AG04449 (cell line): ENCODE measurements at regions of chr10 and their contacts with region 1.

Region 1: DNA sequence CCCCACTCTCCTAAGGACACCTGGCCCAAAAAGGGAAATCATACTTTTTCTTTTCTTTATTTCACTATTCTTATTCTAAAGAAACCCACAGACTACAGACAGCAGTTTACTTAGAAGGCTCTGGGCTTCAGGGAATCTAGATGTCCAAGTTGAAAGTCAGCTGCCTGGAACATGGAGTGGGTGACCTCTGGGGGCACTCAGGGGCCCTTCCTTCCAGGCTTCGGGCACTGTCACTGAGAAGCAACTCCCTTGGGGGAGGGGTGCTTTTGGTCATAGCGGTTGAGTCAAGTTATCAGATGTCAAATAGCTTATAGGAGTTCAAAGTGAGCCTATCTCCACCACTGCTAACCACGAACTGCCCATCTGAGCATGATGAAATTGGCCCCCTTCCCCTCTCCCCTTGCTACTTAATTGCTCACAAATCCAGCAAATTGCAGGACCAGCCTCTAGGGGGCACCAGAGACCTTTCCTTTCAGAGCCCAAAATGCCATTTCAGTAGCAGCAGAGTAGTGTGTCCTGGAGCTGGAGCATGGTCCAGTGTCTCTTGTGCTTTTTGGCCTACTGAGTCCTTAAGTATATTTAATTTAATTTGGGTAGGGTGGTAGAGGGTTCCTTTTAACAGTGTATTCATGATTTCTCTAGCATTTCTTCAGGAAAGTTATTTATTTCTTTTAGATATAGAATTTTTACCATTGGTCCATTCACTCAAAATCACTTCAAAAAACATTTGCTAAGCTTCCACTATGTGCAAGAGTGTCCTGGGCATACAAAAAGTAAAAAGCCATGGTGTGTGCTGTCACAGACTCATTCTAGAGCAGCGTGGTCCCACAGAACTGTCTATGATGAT is 463.8 kb downstream of the KCNMA1 start:
- DNase-seq: no peak
- H3K4me3 ChIP-seq: no peak overlapping the region
- CTCF ChIP-seq: peak; percentile 86

Region 2: GRCh38 chr10:76036111-76036940 is 1137.5 kb before region 1 on chr10:
- CTCF ChIA-PET with region 1: no interaction called
- POLR2A ChIA-PET with region 1: no interaction called
- DNase-seq: no peak
- H3K4me3 ChIP-seq: no peak overlapping the region
- CTCF ChIP-seq: peak; percentile 93

Region 3: GRCh38 chr10:77104459-77104980 is 69.3 kb before region 1 on chr10:
- CTCF ChIA-PET with region 1: no interaction called
- POLR2A ChIA-PET with region 1: no interaction called
- DNase-seq: peak; percentile 61
- H3K4me3 ChIP-seq: no peak overlapping the region
- CTCF ChIP-seq: no peak

Region 4: GRCh38 chr10:77201135-77202106 is 27.6 kb after region 1 on chr10:
- CTCF ChIA-PET with region 1: interaction called, 10 read pairs
- POLR2A ChIA-PET with region 1: no interaction called
- DNase-seq: no peak
- H3K4me3 ChIP-seq: no peak overlapping the region
- CTCF ChIP-seq: no peak

Region 5: DNA sequence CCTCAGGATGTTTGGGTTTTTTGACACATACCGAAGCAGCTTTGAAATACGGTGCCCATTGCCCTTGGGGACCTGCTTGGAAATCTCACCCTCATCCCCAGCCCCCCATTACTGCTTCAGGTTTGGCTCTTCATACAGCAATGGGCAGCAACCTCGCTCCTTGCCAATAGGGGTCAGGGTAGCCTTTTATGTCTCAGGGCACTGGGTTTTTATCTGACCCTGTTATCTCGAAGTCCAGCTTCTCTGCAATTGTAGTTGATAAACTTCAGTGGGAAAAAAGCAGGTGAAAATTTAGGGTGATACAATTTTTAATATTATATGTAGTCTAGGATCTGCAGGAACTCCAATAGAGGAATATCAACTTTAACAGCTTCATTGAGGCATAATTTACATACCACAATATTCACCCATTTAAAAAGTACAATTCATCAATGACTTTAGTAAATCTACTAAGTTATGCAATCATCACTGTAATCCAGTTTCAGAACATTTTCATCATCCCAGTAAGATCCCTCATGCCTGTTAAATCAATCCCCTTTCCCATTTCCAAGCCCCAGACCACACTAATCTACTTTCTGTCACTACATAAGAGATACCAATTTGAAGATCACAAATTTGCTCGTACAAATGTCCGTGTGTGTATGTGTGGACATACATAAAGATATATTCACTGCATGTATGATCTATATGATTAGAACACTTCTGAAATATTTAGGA is 77.6 kb after region 1 on chr10:
- CTCF ChIA-PET with region 1: interaction called, 45 read pairs
- POLR2A ChIA-PET with region 1: no interaction called
- DNase-seq: no peak
- H3K4me3 ChIP-seq: no peak overlapping the region
- CTCF ChIP-seq: peak; percentile 68

Region 6: GRCh38 chr10:77355844-77356243 is 182.0 kb after region 1 on chr10:
- CTCF ChIA-PET with region 1: interaction called, 15 read pairs
- POLR2A ChIA-PET with region 1: interaction called, 4 read pairs
- DNase-seq: peak; percentile 87
- H3K4me3 ChIP-seq: no peak overlapping the region
- CTCF ChIP-seq: no peak

Region 7: DNA sequence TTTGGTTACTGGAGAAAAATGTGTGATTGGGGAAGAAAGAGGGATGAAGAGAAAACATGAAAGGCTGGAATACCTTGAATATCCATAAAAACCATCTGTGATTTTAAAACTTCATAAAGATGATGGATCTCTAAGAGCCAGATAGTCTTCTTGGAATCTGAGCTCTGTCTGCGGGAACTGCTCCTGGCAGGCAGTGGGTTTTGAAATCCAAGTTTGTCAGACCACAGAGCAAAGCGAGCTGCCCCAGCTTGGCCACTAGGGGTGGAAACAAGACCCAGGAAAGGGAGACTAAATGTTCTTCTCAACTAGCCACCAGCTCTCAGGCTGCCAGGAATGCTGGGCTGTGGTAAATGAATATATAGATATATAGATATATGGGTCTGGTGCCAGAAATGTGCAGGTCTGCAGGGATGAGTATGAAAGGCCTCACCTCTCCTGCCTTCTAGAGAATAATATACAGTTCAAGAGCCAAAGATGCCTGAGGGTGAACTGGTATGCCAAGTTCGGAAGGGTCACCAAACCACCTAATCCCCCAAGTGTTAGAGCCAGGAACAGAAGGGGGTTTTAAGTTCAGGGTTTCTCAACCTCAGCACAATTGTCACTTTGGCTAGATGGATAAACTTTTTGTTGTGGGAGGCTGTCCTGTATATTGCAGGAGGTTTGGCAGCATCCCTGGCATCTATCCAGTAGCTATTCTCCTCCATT is 255.0 kb after region 1 on chr10:
- CTCF ChIA-PET with region 1: interaction called, 48 read pairs
- POLR2A ChIA-PET with region 1: no interaction called
- DNase-seq: peak; percentile 51
- H3K4me3 ChIP-seq: no peak overlapping the region
- CTCF ChIP-seq: peak; percentile 87

Region 8: GRCh38 chr10:77501152-77501845 is 327.5 kb after region 1 on chr10:
- CTCF ChIA-PET with region 1: interaction called, 23 read pairs
- POLR2A ChIA-PET with region 1: no interaction called
- DNase-seq: peak; percentile 82
- H3K4me3 ChIP-seq: no peak overlapping the region
- CTCF ChIP-seq: no peak